CD4-positive, alpha-beta memory T cell (primary cell): ENCODE measurements at regions of chr10 and their contacts with region 1.

Region 1: DNA sequence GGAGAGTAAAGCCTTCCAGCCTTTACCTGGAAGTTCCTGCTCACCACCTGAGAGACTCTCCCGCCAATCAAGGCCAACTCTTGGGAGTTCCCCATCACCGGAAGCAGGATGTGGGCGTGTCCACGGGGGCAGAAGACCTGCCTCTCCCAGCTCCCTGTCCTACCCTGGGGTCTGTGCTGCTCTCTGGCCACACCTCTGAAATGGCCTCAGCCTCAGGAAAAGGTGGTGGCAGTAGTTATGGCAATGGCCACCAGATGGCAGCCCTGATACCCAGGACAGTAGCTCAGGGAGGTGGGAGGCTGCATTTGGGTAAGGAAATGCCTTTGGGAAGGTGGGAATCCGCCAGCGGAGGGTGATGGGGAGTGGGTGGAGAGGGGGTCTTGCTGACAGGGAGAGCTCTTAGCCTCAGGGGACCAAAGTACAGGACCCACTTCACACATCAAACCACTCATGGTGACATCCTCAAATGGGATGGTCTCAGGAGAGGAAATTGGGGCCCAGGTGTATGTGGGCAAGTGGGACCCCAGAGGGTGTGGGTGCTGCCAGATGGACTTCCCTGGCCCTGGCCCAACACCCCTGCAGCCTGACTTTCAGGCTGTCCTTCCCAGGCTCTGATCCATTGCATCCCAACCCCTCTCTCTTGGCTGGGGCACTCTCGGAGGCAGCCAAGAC is 33.9 kb downstream of the KAZALD1 start:
- DNase-seq: peak; percentile 60 to 74 (median 64)
- H3K4me3 ChIP-seq: no peak overlapping the region
- H3K4me3 Mint-ChIP-seq: no peak overlapping the region
- H3K27ac ChIP-seq: no peak overlapping the region
- H3K27ac Mint-ChIP-seq: no peak overlapping the region
- H3K4me1 ChIP-seq: no peaks in the 10 kb centered on the region
- H3K4me1 Mint-ChIP-seq: no peaks in the 10 kb centered on the region
- H3K27me3 ChIP-seq: peaks cover 2% of the 10 kb centered on the region
- H3K27me3 Mint-ChIP-seq: peaks cover 34 to 53% of the 10 kb centered on the region in 2 donors

Region 2: DNA sequence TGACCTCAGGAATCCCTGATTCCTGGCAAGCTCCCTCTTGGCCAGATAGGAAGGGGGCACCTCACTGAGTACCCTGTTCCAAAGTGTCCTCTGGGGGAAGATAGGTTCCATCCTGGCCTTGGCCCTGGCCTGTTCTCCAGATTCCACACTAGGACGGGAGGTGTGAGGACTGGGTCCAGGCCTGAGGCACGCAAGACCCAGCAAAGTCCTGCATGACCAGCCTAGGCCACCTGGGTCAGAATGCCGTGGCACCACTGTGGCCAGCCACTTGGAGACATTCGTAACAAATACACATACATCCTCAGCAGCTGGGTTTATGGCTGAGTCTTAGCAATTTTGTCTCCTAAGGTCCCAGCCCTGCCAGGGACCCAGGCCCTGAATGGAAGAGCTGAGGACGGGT is 12.1 kb after region 1 on chr10:
- CTCF ChIA-PET with region 1: interaction called, 22 read pairs
- POLR2A ChIA-PET with region 1: no interaction called
- intact Hi-C with region 1: no loop called
- DNase-seq: no peak
- H3K4me3 ChIP-seq: no peak overlapping the region
- H3K4me3 Mint-ChIP-seq: no peak overlapping the region
- H3K27ac ChIP-seq: no peak overlapping the region
- H3K27ac Mint-ChIP-seq: no peak overlapping the region
- H3K4me1 ChIP-seq: no peaks in the 10 kb centered on the region
- H3K4me1 Mint-ChIP-seq: no peaks in the 10 kb centered on the region
- H3K27me3 ChIP-seq: peaks cover 5% of the 10 kb centered on the region
- H3K27me3 Mint-ChIP-seq: peaks cover 26 to 28% of the 10 kb centered on the region in 2 donors

Region 3: DNA sequence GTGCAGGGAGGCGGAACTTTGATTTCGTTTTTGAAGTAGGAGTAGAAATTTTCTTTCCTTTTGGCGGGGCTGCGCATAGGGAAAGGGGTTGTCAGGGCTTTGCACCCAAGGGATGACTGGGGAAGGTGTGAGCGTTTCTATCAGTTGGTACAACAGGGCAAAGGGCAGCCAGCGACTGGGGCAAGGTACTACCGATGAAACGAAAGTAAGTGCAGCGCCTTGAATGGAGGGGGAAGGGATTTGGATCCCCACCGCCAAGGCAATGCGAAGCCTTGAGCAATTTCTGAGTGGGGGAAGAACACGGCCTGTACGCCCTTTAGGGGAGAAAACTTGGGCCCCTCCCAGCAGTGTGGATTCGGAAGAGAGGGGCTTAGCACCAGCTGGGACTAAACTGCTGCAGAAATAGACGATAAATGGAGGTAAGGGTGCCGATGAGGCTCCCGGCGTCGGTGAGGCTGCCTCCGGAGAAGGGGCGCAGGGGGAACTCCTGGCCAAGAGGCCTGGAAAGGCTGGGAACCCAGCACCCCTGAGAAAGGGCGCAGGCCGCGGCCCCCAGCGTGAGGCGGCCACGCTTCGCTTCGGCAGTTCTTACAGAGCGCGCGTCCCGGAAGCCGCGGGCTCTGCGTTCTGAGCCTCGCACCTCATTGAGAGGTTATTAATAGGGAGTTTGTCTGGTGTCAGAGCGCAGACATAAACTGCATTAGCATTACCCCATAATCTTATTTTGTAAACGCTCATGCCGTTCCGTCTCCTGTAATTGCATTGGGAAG is 25.4 kb after region 1 on chr10:
- CTCF ChIA-PET with region 1: interaction called, 11 read pairs
- POLR2A ChIA-PET with region 1: no interaction called
- intact Hi-C with region 1: no loop called
- DNase-seq: peak in 4 of 5 donors; percentile 46 to 54 (median 48)
- H3K4me3 ChIP-seq: peak overlapping the region; percentile 62 to 84
- H3K4me3 Mint-ChIP-seq: peak overlapping the region; percentile 94 to 99 (median 98)
- H3K27ac ChIP-seq: no peak overlapping the region
- H3K27ac Mint-ChIP-seq: peak overlapping the region; percentile 62 to 94 (median 87)
- H3K4me1 ChIP-seq: peaks cover 30% of the 10 kb centered on the region
- H3K4me1 Mint-ChIP-seq: peaks cover 13 to 32% (median 25%) of the 10 kb centered on the region in 4 donors
- H3K27me3 ChIP-seq: peaks cover 36% of the 10 kb centered on the region
- H3K27me3 Mint-ChIP-seq: peaks cover 22 to 42% of the 10 kb centered on the region in 2 donors